ENCODE measurements at regions of chr3 and their contacts with region 1.

Region 1: GRCh38 chr3:42229942-42230688 is 35.9 kb downstream of the CCK start:
- DNase-seq: peak in 3 of 5 donors; percentile 24 to 73 (median 69)
- H3K4me3 ChIP-seq: no peak overlapping the region
- H3K27ac ChIP-seq: no peak overlapping the region
- H3K4me1 ChIP-seq: peaks cover 0 to under 1% (median 0%) of the 10 kb centered on the region in 3 donors
- H3K27me3 ChIP-seq: no peaks in the 10 kb centered on the region
- CTCF ChIP-seq: peak; percentile 50

Region 2: DNA sequence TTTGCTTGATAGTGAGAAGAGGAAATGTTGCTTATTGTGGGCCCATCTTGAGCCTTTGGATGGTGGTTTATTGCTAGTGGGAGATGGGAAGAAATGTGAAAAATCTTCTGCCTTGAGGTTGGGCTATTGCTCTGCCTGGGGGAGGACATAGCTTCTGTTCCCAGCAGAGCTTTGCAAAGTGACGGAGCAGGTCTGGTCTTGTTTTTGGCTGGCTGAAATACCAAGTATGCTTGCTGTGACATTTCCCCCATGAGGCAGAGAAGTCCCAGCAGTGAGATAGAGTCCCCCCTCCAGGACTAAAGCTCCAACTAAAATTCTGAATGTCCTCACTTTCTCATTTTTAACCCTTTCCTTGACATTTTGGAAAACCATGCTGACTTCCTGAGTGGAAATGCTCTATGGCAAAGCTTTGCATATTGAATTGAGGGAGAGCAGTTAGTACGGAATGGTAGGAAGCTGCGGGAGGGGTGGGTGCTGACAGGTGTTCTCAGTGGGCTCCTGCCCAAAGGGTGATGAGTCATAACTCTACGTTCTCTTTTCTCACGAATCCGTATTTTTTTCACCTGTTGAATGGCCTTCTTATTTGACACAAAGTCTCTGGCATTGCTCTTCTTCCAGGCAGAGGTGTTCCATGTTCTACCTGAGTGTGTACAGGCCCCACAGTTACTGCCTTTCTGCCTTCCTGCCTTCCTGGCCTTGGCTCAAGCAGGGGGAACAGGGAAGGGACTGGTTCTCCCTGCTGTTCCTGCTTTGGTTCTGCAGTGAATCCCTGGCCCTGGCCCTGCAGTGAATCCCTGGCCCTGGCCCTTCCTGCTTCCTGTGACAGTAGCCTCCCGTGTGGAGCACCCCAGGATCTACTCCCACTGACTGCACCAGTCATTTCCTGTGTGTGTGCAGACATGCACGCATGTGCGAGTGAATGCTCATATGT is 107.2 kb before region 1 on chr3:
- intact Hi-C with region 1: no loop called
- DNase-seq: no peak
- H3K4me3 ChIP-seq: no peak overlapping the region
- H3K27ac ChIP-seq: peak overlapping the region in 1 of 2 donors; percentile 58
- H3K4me1 ChIP-seq: peaks cover 0 to 21% (median 14%) of the 10 kb centered on the region in 3 donors
- H3K27me3 ChIP-seq: no peaks in the 10 kb centered on the region
- CTCF ChIP-seq: no peak

Region 3: GRCh38 chr3:42547401-42547945 is 317.4 kb after region 1 on chr3:
- intact Hi-C with region 1: loop called (anchors 10 kb)
- DNase-seq: peak; percentile 62 to 85 (median 63)
- H3K4me3 ChIP-seq: no peak overlapping the region
- H3K27ac ChIP-seq: no peak overlapping the region
- H3K4me1 ChIP-seq: peaks cover 0 to 4% (median 3%) of the 10 kb centered on the region in 3 donors
- H3K27me3 ChIP-seq: no peaks in the 10 kb centered on the region
- CTCF ChIP-seq: peak; percentile 91